ENCODE measurements at regions of chr2 and their contacts with region 1.

Region 1: DNA sequence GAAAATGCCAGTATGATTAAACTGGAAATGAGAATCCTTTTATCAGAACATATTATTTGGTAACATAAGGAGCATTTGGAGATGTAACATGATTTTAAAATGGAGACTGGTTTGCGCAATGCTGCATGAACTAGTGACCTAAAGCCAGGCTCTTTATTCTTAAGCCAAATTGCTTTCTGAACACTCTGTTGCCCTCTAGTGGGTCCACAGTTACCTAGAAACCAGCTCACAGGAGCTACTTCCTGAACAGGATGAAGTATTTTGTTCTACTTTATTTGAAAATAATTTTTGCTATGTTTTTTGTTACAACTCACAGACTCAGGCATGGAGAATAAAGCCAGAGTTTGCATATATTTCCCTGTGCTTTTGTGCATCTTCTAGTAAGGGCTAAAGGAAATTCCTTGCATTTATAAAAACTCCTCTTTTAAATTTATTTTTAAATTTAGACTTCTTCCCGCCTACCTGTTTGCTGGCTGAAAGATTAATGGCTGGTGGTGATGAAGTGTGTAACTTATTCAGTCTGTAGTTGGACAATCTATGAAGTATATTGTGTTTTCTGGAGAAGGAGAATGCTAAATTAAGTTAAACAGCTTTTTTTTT is 146.7 kb downstream of the PARD3B start:
- DNase-seq: peak; percentile 88
- ATAC-seq: peak; percentile 84
- H3K4me3 ChIP-seq: no peak overlapping the region
- H3K27ac ChIP-seq: no peak overlapping the region
- H3K4me1 ChIP-seq: no peaks in the 10 kb centered on the region
- H3K27me3 ChIP-seq: no peaks in the 10 kb centered on the region
- CTCF ChIP-seq: peak; percentile 89

Region 2: GRCh38 chr2:204145263-204145751 is 546.7 kb before region 1 on chr2:
- CTCF ChIA-PET with region 1: no interaction called
- POLR2A ChIA-PET with region 1: no interaction called
- intact Hi-C with region 1: loop called (anchors 10 kb)
- DNase-seq: peak; percentile 87
- ATAC-seq: peak; percentile 99
- H3K4me3 ChIP-seq: peak overlapping the region; percentile 68
- H3K27ac ChIP-seq: no peak overlapping the region
- H3K4me1 ChIP-seq: no peaks in the 10 kb centered on the region
- H3K27me3 ChIP-seq: peaks cover 64% of the 10 kb centered on the region
- CTCF ChIP-seq: peak; percentile 98

Region 3: DNA sequence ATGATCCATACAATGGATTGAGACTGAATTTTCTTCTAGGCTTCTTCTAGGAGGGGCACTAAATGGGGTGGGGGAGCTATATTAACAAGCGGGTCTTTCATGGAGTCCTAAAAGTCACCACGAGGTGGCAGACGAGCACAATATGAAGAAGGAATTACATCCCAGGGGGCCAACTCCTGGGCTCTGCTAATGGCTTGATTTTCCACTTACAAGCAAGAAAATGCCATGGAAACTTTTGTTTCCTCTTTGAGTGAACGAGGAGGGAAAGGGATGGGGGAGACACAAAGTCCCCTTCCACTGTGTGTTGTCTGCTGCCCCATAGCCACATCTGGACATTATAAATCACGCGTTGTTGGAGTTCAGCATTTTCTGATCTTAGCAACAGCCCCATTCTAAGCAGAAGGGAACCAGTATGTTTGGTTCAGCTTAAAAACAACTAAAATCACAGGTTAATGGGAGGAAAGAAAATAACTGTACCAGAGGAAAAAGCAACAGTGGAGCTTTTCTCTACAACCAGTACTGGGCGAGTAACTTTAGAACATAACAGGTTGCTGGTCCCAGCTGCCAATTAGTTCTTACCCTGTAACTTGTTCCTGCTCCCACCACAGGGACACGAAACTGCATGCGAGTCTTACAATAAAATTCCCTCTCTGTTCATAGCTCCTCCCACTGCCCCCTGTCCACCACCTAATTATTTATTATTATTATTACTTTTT is 431.7 kb before region 1 on chr2:
- CTCF ChIA-PET with region 1: interaction called, 4 read pairs
- POLR2A ChIA-PET with region 1: no interaction called
- intact Hi-C with region 1: loop called (anchors 1 kb)
- DNase-seq: peak; percentile 84
- ATAC-seq: peak; percentile 82
- H3K4me3 ChIP-seq: no peak overlapping the region
- H3K27ac ChIP-seq: no peak overlapping the region
- H3K4me1 ChIP-seq: peaks cover 12% of the 10 kb centered on the region
- H3K27me3 ChIP-seq: 0 out of 2 replicates have a peak, but pooled peaks cover 2% of the 10 kb centered on the region
- CTCF ChIP-seq: peak; percentile 93

Region 4: GRCh38 chr2:204360209-204361007 is 331.6 kb before region 1 on chr2:
- CTCF ChIA-PET with region 1: no interaction called
- POLR2A ChIA-PET with region 1: no interaction called
- intact Hi-C with region 1: no loop called
- DNase-seq: no peak
- ATAC-seq: peak; percentile 42; the same call in 1 of the 2 replicates
- H3K4me3 ChIP-seq: no peak overlapping the region
- H3K27ac ChIP-seq: no peak overlapping the region
- H3K4me1 ChIP-seq: no peaks in the 10 kb centered on the region
- H3K27me3 ChIP-seq: no peaks in the 10 kb centered on the region
- CTCF ChIP-seq: peak; percentile 33; the same call in 1 of the 2 replicates

Region 5: DNA sequence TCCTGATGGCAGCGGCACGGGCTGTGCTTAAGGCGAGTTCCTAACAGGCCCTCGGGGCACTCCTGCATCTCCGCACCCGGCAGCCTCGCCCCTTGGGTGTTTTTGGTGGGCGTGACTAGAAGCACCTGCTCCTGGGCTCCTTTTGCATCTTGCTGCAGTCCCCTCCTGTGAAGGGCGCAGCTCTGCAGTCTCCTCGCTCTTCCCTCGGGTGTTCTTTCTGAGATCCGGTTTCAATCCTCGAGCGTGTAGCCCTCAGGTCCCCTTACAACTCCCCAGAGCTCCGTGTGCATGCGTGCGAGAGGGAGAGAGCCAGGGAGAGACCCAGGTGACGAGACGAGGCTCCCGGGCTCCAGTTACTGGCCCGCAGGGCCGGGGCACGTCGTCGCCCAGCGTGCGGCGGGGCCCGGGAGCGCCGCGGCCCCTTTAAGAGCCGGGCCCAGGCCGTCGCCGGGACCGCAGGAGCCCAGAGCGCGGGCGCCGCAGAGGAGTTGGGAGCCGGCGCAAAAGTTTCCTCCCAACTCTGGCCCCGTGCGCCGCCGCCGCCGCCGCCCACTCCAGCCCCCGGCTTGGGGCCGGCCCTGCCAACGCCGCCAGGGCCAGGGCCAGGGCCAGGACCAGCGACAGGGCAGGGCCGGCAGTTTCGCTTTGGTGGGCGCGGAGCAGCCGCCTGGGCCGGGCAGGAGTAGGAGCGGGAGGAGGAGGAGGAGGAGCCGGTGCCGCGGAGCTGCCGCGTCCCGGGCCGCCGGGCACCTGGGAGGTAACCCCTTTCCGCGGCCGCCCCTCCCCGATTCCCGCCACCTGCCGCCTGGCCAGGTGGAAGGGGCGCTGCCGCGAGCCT is 146.8 kb before region 1 on chr2 and contains the start of gene PARD3B:
- CTCF ChIA-PET with region 1: interaction called, 3 read pairs
- POLR2A ChIA-PET with region 1: no interaction called
- intact Hi-C with region 1: loop called (anchors 5 kb)
- DNase-seq: peak; percentile 74
- ATAC-seq: peak; percentile 84
- H3K4me3 ChIP-seq: peak within 1 kb of the TSS; percentile 80
- H3K27ac ChIP-seq: peak within 1 kb of the TSS; percentile 49
- H3K4me1 ChIP-seq: peaks cover 20% of the 10 kb centered on the region
- H3K27me3 ChIP-seq: no peaks in the 10 kb centered on the region
- CTCF ChIP-seq: no peak
- total RNA-seq, gene PARD3B: 3.9 and 10.9 TPM in 2 replicates

Region 6: GRCh38 chr2:204625167-204625566 is 66.8 kb before region 1 on chr2:
- CTCF ChIA-PET with region 1: interaction called, 6 read pairs
- POLR2A ChIA-PET with region 1: no interaction called
- intact Hi-C with region 1: loop called (anchors 5 kb)
- DNase-seq: peak; percentile 65
- ATAC-seq: peak; percentile 97
- H3K4me3 ChIP-seq: no peak overlapping the region
- H3K27ac ChIP-seq: no peak overlapping the region
- H3K4me1 ChIP-seq: peaks cover 5% of the 10 kb centered on the region; the same call in 1 of the 2 replicates
- H3K27me3 ChIP-seq: no peaks in the 10 kb centered on the region
- CTCF ChIP-seq: peak; percentile 68

Region 7: DNA sequence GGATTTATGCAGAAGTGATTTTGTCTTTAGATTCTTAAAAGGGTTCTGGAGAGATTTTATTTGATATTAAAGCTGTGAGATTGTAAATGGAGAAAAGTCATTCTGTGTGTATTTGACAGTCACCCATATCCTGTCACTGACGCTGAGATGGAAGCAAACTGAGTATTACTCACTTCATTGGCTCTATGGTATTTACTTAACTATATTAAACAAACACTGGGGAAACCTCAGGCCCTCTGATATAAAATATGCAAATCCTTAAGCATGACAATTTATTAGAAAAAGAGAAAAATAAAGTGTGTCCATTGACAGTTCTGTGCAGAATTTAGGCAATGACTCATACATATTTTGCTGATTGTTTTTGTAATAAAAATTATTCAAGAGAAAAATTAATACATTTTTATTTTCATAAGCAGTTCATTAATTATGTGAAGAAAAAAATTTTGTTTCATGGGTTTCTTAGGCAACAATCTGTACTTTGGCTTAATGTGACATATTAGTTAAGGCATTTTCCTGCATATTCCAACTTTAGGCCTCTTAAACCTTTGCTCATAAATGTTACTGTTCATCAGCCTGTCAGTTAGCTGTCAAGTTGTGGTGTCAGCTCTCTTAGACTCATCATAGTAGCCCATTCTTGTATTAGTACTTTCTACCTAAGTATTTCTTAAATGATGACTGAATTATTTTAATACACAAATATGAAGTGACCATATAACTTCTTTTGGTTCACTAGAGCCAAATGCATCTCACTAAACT is 46.8 kb before region 1 on chr2:
- CTCF ChIA-PET with region 1: no interaction called
- POLR2A ChIA-PET with region 1: no interaction called
- intact Hi-C with region 1: loop called (anchors 5 kb)
- DNase-seq: peak; percentile 85
- ATAC-seq: peak; percentile 98
- H3K4me3 ChIP-seq: no peak overlapping the region
- H3K27ac ChIP-seq: peak overlapping the region; percentile 71
- H3K4me1 ChIP-seq: peaks cover 28% of the 10 kb centered on the region
- H3K27me3 ChIP-seq: no peaks in the 10 kb centered on the region
- CTCF ChIP-seq: no peak

Region 8: GRCh38 chr2:204842661-204843485 is 150.9 kb after region 1 on chr2:
- CTCF ChIA-PET with region 1: no interaction called
- POLR2A ChIA-PET with region 1: no interaction called
- intact Hi-C with region 1: loop called (anchors 5 kb)
- DNase-seq: peak; percentile 84
- ATAC-seq: peak; percentile 93
- H3K4me3 ChIP-seq: peak overlapping the region; percentile 25; the same call in 1 of the 2 replicates
- H3K27ac ChIP-seq: peak overlapping the region; percentile 57
- H3K4me1 ChIP-seq: peaks cover 28% of the 10 kb centered on the region
- H3K27me3 ChIP-seq: no peaks in the 10 kb centered on the region
- CTCF ChIP-seq: no peak

Measured in PC-3 (cell line).